Activated CD4-positive, alpha-beta T cell treated with anti-CD3 and anti-CD28 coated beads, Interleukin-2, amount 10 ng/mL, durations not matched to agents 24 days and 14 days (primary cell): ENCODE measurements at regions of chr5 and their contacts with region 1.

Region 1: GRCh38 chr5:151825445-151825844 is 53.7 kb downstream of the G3BP1 start:
- DNase-seq: peak; percentile 77
- H3K4me3 Mint-ChIP-seq: no peak overlapping the region
- H3K27ac Mint-ChIP-seq: no peak overlapping the region
- H3K4me1 Mint-ChIP-seq: no peaks in the 10 kb centered on the region
- H3K27me3 Mint-ChIP-seq: no peaks in the 10 kb centered on the region

Region 2: GRCh38 chr5:151961557-151961956 is 136.1 kb after region 1 on chr5:
- intact Hi-C with region 1: no loop called
- DNase-seq: no peak
- H3K4me3 Mint-ChIP-seq: no peak overlapping the region
- H3K27ac Mint-ChIP-seq: no peak overlapping the region
- H3K4me1 Mint-ChIP-seq: peaks cover 5% of the 10 kb centered on the region
- H3K27me3 Mint-ChIP-seq: no peaks in the 10 kb centered on the region

Region 3: GRCh38 chr5:152142840-152143469 is 317.5 kb after region 1 on chr5:
- intact Hi-C with region 1: loop called (anchors 1 kb)
- DNase-seq: peak; percentile 86
- H3K4me3 Mint-ChIP-seq: no peak overlapping the region
- H3K27ac Mint-ChIP-seq: no peak overlapping the region
- H3K4me1 Mint-ChIP-seq: no peaks in the 10 kb centered on the region
- H3K27me3 Mint-ChIP-seq: peaks cover 3% of the 10 kb centered on the region

Region 4: GRCh38 chr5:152505442-152506042 is 680.1 kb after region 1 on chr5:
- intact Hi-C with region 1: loop called (anchors 10 kb)
- DNase-seq: peak; percentile 78
- H3K4me3 Mint-ChIP-seq: no peak overlapping the region
- H3K27ac Mint-ChIP-seq: no peak overlapping the region
- H3K4me1 Mint-ChIP-seq: no peaks in the 10 kb centered on the region
- H3K27me3 Mint-ChIP-seq: peaks cover 3% of the 10 kb centered on the region